GM18951 (cell line): ENCODE measurements at regions of chr5 and their contacts with region 1.

Region 1: GRCh38 chr5:32585446-32586275 is at the start of gene SUB1:
- POLR2A ChIP-seq: peak; percentile 92

Region 2: GRCh38 chr5:32489791-32490582 is 95.7 kb before region 1 on chr5:
- in situ Hi-C with region 1: loop called (anchors 10 kb)
- POLR2A ChIP-seq: no peak

Region 3: GRCh38 chr5:32531885-32532520 is 53.7 kb before region 1 on chr5:
- in situ Hi-C with region 1: loop called (anchors 10 kb)
- POLR2A ChIP-seq: no peak